ENCODE measurements at regions of chr7 and their contacts with region 1.

Region 1: GRCh38 chr7:73828107-73828803 is 2.5 kb upstream of the CLDN4 start:
- DNase-seq: no peak
- H3K4me3 ChIP-seq: no peak overlapping the region
- H3K27ac ChIP-seq: peak overlapping the region; percentile 90 to 98 (median 95)
- H3K4me1 ChIP-seq: peaks cover 71 to 72% of the 10 kb centered on the region in 2 donors
- H3K27me3 ChIP-seq: no peaks in the 10 kb centered on the region
- CTCF ChIP-seq: no peak
- POLR2A ChIP-seq: peak; percentile 59 to 84

Region 2: GRCh38 chr7:73738612-73739374 is 89.5 kb before region 1 on chr7 and contains the start of gene ABHD11:
- intact Hi-C with region 1: loop called (anchors 5 kb)
- DNase-seq: peak; percentile 97 to 98
- H3K4me3 ChIP-seq: peak within 1 kb of the TSS; percentile 61 to 87 (median 79)
- H3K27ac ChIP-seq: peak within 1 kb of the TSS; percentile 98 to 100 (median 99)
- H3K4me1 ChIP-seq: peaks cover 47 to 71% of the 10 kb centered on the region in 2 donors
- H3K27me3 ChIP-seq: no peaks in the 10 kb centered on the region
- CTCF ChIP-seq: no peak
- POLR2A ChIP-seq: peak; percentile 91 to 98
- total RNA-seq, gene ABHD11: 39.5 to 75.8 (median 67.1) TPM